Sigmoid colon (tissue), 7 donors: ENCODE measurements at regions of chr18 and their contacts with region 1.

Region 1: DNA sequence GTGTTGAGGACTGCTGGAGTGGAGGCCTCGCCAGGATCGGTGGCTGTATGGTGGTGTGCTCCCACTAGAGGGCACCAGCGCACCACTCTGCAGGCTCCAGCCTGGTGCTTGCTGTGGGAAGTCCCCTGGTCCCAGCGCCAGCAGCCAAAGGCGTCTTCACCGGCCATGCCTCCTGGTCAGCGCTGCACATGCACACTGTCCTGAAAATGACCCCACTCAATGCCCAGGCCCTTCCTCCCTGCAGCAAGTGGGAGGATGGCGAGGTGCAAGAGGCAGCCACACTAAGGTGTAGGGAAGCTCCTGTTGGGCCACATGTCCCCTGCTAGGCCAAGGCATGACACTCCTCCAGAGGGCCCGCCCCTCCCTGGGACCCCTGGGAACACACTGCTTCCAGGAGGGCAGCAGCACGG is 136.5 kb downstream of the CTIF start:
- DNase-seq: peak; percentile 92
- H3K4me3 ChIP-seq: no peak overlapping the region
- H3K27ac ChIP-seq: no peak overlapping the region
- H3K4me1 ChIP-seq: peaks cover 0 to 50% (median 30%) of the 10 kb centered on the region in 4 donors
- H3K27me3 ChIP-seq: no peaks in the 10 kb centered on the region
- CTCF ChIP-seq: peak; percentile 77 to 93 (median 84)
- EP300 ChIP-seq: no peak
- POLR2A ChIP-seq: no peak

Region 2: DNA sequence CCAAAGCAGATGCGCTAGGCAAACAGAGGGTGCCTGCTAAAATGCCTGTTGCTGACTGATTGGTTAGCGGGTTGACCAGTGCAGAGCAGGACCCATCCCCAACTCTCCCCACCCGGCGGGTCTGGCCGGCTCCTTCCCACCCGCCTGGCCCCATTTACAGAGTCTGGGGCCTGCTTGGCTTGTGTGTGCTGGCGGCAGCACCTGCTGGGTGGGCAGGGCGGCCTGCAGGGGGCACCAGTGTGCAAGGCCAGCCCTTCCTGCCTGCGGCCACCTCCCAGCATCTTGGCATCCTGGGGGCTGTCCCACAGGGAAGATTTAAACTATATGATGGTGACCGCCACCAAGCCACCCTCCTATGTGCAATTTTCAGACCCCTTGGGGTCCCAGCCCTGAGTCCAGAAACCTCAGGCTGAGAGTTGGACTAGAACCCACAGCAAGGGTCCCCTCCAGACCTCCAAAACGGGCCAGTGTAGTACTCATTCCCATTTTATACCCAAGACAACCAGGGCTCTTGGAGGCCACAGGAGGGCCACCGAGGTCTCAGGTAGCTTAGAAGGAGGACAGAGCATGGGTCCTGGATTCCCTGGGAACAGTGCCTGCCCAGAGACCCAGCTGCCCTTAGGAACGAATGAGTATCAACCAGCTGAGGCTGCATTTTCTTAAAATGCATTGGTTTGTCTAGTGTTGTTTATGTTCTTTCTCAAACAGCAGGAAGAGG is 101.8 kb after region 1 on chr18:
- intact Hi-C with region 1: loop called (anchors 5 kb)
- DNase-seq: peak; percentile 77
- H3K4me3 ChIP-seq: no peak overlapping the region
- H3K27ac ChIP-seq: peak overlapping the region in 3 of 4 donors; percentile 6 to 19 (median 16)
- H3K4me1 ChIP-seq: peaks cover 0 to 63% (median 50%) of the 10 kb centered on the region in 4 donors
- H3K27me3 ChIP-seq: no peaks in the 10 kb centered on the region
- CTCF ChIP-seq: peak; percentile 56 to 85 (median 72)
- EP300 ChIP-seq: no peak
- POLR2A ChIP-seq: no peak

Region 3: GRCh38 chr18:49041435-49042245 is 366.3 kb after region 1 on chr18:
- intact Hi-C with region 1: loop called (anchors 2 kb)
- DNase-seq: peak; percentile 80
- H3K4me3 ChIP-seq: no peak overlapping the region
- H3K27ac ChIP-seq: no peak overlapping the region
- H3K4me1 ChIP-seq: peaks cover 0 to 8% (median 0%) of the 10 kb centered on the region in 4 donors
- H3K27me3 ChIP-seq: no peaks in the 10 kb centered on the region
- CTCF ChIP-seq: peak; percentile 36 to 68 (median 48)
- EP300 ChIP-seq: no peak
- POLR2A ChIP-seq: no peak

Region 4: GRCh38 chr18:49238433-49239042 is 563.2 kb after region 1 on chr18:
- intact Hi-C with region 1: loop called (anchors 5 kb)
- DNase-seq: no peak
- H3K4me3 ChIP-seq: no peak overlapping the region
- H3K27ac ChIP-seq: no peak overlapping the region
- H3K4me1 ChIP-seq: no peaks in the 10 kb centered on the region
- H3K27me3 ChIP-seq: no peaks in the 10 kb centered on the region
- CTCF ChIP-seq: peak in 1 of 4 experiments; percentile 27
- EP300 ChIP-seq: no peak
- POLR2A ChIP-seq: no peak

Region 5: DNA sequence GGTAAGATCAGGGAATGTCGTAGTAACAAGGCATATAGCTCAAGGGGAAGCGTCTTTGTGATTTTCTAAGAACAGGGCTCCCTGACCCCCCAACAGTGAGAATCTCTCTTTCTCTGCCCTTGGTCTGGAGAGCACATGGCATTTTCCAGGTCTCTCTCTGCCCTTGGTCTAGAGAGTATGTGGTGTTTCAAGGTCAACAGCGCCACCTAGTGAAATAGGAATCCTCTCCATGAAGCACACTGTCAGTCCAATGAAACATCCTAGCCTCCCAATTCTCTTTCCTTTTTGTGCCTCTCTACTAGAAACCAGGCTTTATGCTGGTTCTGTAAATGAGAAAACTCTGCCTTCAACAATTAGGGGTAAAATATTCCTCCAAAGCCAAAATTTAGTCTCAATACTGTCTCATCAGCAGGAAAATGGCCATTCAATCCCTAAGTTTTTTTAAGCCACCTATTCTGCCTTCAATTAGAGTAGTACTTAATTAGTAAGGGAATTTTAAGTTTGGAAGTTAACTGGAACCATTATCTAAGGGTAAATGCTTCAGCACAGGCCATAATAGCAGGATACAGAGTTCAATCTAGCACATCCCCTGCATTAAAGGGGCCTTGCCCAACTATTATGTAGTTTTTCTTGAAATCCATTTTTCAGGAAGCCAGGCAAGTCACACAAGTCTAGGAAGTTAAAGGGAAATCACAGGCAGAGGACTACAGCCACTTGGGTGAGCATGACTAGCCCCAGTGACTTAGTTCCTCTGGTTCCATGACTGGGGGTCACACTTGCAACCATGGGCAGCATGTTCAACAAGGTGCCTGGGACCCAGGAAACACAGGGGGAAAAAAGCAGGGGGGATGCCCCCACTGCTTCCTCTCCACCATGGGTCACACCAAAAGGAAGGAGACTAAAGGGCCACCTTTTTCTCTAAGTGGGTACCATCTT is 772.7 kb after region 1 on chr18:
- intact Hi-C with region 1: loop called (anchors 10 kb)
- DNase-seq: no peak
- H3K4me3 ChIP-seq: no peak overlapping the region
- H3K27ac ChIP-seq: no peak overlapping the region
- H3K4me1 ChIP-seq: peaks cover 0 to 13% (median 0%) of the 10 kb centered on the region in 4 donors
- H3K27me3 ChIP-seq: no peaks in the 10 kb centered on the region
- CTCF ChIP-seq: peak in 2 of 4 experiments; percentile 43 to 50
- EP300 ChIP-seq: no peak
- POLR2A ChIP-seq: no peak